Heart left ventricle (tissue), 16 donors: ENCODE measurements at regions of chr6 and their contacts with region 1.

Region 1: GRCh38 chr6:143745166-143746133 is 67.7 kb downstream of the PHACTR2 start:
- DNase-seq: peak in 1 of 5 donors; percentile 49
- ATAC-seq: peak; percentile 27 to 65 (median 60)
- H3K4me3 ChIP-seq: peak overlapping the region in 6 of 12 donors; percentile 1 to 15 (median 12)
- H3K27ac ChIP-seq: peak overlapping the region; percentile 26 to 81 (median 65)
- H3K4me1 ChIP-seq: peaks cover 7 to 78% (median 58%) of the 10 kb centered on the region in 12 donors
- H3K27me3 ChIP-seq: no peaks in the 10 kb centered on the region
- CTCF ChIP-seq: no peak
- POLR2A ChIP-seq: no peak

Region 2: DNA sequence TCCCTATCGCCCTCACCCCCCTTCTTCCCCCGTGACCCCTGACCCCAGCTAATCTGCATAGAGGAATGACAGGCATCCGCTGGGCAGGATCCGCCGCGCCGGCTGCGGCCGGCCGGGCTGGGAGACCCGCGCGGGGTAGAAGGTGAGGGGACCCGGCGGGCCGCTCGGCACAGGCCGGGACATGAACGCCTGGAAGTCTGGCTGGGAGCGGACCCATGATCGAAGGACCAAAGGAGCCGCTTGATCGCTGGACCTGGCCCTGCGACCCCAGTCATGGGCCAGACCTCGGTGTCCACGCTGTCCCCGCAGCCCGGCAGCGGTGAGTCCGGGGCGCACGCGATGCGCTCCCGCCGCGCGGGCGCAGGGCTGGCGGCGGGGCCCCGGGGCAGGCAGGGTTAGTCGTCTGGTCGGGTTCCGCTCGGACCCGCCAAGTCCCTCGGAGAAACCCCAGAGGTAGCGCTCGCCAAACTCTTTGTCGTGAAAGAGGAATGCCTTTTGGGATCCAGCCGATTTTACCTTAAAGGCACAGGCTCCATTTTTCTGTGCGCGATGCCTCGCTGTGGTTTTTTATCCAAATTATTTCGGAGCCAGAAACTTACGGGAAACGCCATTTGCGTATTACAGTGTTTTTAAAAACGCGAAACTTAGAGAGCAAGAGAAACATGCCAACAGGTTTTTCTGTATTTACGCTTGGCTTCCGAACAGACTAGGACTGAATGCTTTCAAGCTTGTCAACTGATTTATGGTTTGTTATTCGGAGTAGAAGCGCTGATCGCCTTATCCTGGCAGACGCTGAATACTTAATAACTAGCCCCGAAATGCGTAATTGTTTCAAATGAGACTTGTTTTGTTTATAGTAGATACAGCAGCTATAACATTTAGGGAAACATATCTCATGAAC is 67.3 kb before region 1 on chr6 and contains the start of gene PHACTR2:
- intact Hi-C with region 1: loop called in 7 of 10 experiments (anchors 2 to 10 kb)
- DNase-seq: peak; percentile 85 to 90 (median 87)
- ATAC-seq: peak; percentile 84 to 96 (median 91)
- H3K4me3 ChIP-seq: peak within 1 kb of the TSS; percentile 49 to 97 (median 80)
- H3K27ac ChIP-seq: peak within 1 kb of the TSS; percentile 94 to 99 (median 96)
- H3K4me1 ChIP-seq: peaks cover 0 to 64% (median 37%) of the 10 kb centered on the region in 12 donors
- H3K27me3 ChIP-seq: no peaks in the 10 kb centered on the region
- CTCF ChIP-seq: no peak
- POLR2A ChIP-seq: peak in 1 of 2 donors; percentile 82
- total RNA-seq, gene PHACTR2: 47.8 to 101 (median 68.3) TPM

Region 3: DNA sequence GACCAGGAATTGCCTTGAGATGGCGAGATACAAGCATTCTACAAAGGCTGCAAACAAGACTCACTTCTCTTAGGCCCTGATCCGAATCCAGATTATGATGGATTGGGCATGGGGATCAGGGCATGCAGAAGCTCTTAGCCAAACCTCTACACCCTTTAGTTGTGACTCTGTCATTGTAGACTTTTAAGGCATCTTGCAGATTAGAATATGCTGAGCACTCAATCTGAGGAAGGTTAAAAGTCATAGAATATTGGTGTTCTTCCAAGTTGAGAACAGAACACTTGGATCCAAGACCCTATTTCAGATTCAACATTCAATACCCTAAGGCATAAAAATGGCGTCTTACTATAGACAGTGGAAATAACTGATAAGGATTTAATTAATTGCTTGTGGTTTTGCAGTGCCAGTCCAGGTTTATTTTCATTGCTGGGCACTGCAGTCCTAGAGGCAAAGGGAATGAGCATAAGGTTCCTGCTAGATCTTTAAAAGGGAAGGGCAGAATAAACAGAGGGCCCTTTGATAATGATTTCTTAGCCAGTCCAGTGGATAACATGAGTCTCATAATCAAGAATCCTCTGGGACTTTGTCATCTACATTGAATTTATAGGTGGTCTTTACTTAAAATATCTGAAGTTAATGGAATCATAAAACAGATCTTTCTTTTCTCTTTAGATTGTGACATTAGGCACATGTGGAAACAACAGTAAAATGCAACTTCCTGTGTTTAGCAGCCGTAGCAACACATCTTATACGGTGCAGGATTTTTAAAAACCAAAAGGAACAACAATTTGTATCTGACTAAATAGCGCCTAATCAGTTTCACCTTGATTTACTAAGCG is 50.1 kb before region 1 on chr6:
- intact Hi-C with region 1: loop called in 3 of 10 experiments (anchors 5 kb)
- DNase-seq: no peak
- ATAC-seq: peak in 1 of 4 donors; percentile 41
- H3K4me3 ChIP-seq: no peak overlapping the region
- H3K27ac ChIP-seq: peak overlapping the region in 9 of 12 donors; percentile 1 to 78 (median 42)
- H3K4me1 ChIP-seq: peaks cover 4 to 95% (median 76%) of the 10 kb centered on the region in 12 donors
- H3K27me3 ChIP-seq: no peaks in the 10 kb centered on the region
- CTCF ChIP-seq: no peak
- POLR2A ChIP-seq: no peak

Region 4: DNA sequence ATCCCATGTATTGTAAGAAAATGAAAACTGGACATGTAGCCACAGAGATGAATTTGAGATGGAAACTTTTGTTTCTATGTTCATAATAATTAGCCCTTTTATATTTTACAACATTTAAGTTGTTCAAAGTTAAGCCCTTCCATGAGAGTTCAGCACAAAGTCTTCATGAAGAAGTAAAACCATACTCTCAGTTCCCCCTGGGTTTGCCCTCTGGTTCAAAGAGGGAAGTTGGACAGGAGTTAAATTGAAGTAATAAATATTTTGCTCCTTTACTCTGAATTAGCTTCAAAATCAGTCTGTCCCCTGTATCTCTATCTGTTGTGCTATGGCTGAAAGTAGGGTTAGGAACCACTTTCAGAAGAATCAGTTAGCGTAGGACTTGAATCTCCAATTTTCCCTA is 36.6 kb before region 1 on chr6:
- intact Hi-C with region 1: loop called in 2 of 10 experiments (anchors 5 kb)
- DNase-seq: no peak
- ATAC-seq: no peak
- H3K4me3 ChIP-seq: peak overlapping the region in 1 of 12 donors; percentile 43
- H3K27ac ChIP-seq: peak overlapping the region in 1 of 12 donors; percentile 80
- H3K4me1 ChIP-seq: peaks cover 0 to 49% (median 7%) of the 10 kb centered on the region in 12 donors
- H3K27me3 ChIP-seq: no peaks in the 10 kb centered on the region
- CTCF ChIP-seq: no peak
- POLR2A ChIP-seq: no peak

Region 5: DNA sequence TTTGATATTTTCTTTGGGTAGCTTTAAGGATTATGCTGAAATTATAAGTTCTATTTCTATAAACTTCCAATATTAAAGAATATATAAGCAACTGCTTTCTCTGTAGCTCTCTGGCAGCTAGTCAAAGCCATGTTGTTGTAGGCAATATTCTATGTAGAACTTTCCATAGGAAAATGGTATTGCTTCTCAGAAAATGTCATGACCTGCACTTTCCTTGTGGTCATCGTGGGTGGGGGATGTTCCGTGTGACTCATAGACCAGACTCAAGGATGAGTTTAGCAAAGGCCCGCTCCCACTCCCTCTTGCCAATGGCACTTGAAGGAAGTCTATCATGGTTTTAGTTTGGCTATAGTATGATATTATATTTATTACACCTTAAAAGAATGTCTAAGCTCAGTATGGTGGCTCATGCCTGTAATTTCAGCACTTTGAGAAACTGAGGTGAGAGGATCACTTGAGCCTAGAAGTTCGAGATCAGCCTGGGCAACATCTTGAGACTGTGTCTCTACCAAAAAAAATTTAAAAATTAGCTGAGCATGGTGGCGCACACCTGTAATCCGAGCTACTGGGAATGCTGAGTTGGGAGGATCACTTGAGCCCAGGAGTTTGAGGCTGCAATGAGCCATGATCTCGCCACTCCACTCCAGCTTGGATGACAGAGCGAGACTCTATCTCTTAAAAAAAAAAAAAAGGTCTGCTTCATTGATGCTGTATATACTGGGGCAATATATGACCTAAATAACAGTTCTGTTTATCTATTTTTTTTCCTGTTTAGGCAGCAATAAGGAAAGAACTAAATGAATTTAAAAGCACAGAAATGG is 61.0 kb after region 1 on chr6:
- intact Hi-C with region 1: loop called in 1 of 10 experiments (anchors 5 kb)
- DNase-seq: peak in 1 of 5 donors; percentile 16
- ATAC-seq: peak in 1 of 4 donors; percentile 39
- H3K4me3 ChIP-seq: no peak overlapping the region
- H3K27ac ChIP-seq: peak overlapping the region in 4 of 12 donors; percentile 3 to 53 (median 50)
- H3K4me1 ChIP-seq: peaks cover 0 to 39% (median 5%) of the 10 kb centered on the region in 12 donors
- H3K27me3 ChIP-seq: no peaks in the 10 kb centered on the region
- CTCF ChIP-seq: no peak
- POLR2A ChIP-seq: no peak